Posterior vena cava (tissue), 2 donors: ENCODE measurements at regions of chr5 and their contacts with region 1.

Region 1: GRCh38 chr5:65938256-65938655 is 11.9 kb downstream of the ERBIN start:
- DNase-seq: no peak

Region 2: GRCh38 chr5:66010476-66010875 is 72.2 kb after region 1 on chr5:
- intact Hi-C with region 1: loop called in 1 of 2 experiments (anchors 10 kb)
- DNase-seq: no peak

Region 3: GRCh38 chr5:66306105-66306843 is 368.0 kb after region 1 on chr5:
- intact Hi-C with region 1: no loop called
- DNase-seq: no peak